ENCODE measurements at regions of chr10 and their contacts with region 1.

Region 1: GRCh38 chr10:72061491-72061890 is 26.9 kb downstream of the SPOCK2 start:
- DNase-seq: no peak
- H3K4me3 ChIP-seq: no peak overlapping the region
- H3K4me3 Mint-ChIP-seq: peak overlapping the region in 3 of 8 donors; percentile 34 to 71 (median 36)
- H3K27ac ChIP-seq: no peak overlapping the region
- H3K27ac Mint-ChIP-seq: peak overlapping the region in 6 of 7 donors; percentile 68 to 92 (median 83)
- H3K4me1 ChIP-seq: peaks cover 5% of the 10 kb centered on the region
- H3K4me1 Mint-ChIP-seq: peaks cover 17 to 49% (median 23%) of the 10 kb centered on the region in 4 donors
- H3K27me3 ChIP-seq: no peaks in the 10 kb centered on the region
- H3K27me3 Mint-ChIP-seq: no peaks in the 10 kb centered on the region

Region 2: GRCh38 chr10:71999360-72000072 is 62.0 kb before region 1 on chr10:
- CTCF ChIA-PET with region 1: no interaction called
- POLR2A ChIA-PET with region 1: no interaction called
- intact Hi-C with region 1: no loop called
- DNase-seq: no peak
- H3K4me3 ChIP-seq: no peak overlapping the region
- H3K4me3 Mint-ChIP-seq: no peak overlapping the region
- H3K27ac ChIP-seq: no peak overlapping the region
- H3K27ac Mint-ChIP-seq: no peak overlapping the region
- H3K4me1 ChIP-seq: no peaks in the 10 kb centered on the region
- H3K4me1 Mint-ChIP-seq: peaks cover 0 to 2% (median 0%) of the 10 kb centered on the region in 4 donors
- H3K27me3 ChIP-seq: no peaks in the 10 kb centered on the region
- H3K27me3 Mint-ChIP-seq: peaks cover 0 to 2% of the 10 kb centered on the region in 2 donors

Region 3: DNA sequence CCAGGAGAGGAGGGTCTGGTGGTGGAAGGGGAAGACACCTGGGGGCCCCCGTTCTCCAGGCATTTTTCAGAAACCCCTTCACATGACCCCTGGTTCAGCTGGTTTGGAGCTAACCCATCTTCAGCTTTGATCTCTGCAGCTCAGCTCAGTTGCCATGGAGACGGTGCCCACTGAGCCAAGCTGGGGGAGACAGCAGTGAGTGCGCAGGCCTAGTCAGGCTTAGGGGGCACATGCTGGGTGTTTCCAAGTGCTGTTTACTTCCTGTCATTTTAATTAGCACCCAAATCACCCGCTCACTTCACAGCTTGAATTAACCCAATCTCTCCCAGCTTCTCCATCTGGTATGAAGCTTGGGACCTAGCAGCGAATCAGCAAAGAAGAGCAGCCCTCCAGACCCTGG is 17.9 kb after region 1 on chr10:
- CTCF ChIA-PET with region 1: interaction called, 4 read pairs
- POLR2A ChIA-PET with region 1: interaction called, 329 read pairs
- intact Hi-C with region 1: no loop called
- DNase-seq: peak; percentile 55 to 85 (median 71)
- H3K4me3 ChIP-seq: peak overlapping the region in 1 of 2 donors; percentile 25
- H3K4me3 Mint-ChIP-seq: peak overlapping the region; percentile 47 to 96 (median 81)
- H3K27ac ChIP-seq: peak overlapping the region; percentile 94
- H3K27ac Mint-ChIP-seq: peak overlapping the region; percentile 86 to 97 (median 93)
- H3K4me1 ChIP-seq: peaks cover 97% of the 10 kb centered on the region
- H3K4me1 Mint-ChIP-seq: peaks cover 59 to 99% (median 87%) of the 10 kb centered on the region in 4 donors
- H3K27me3 ChIP-seq: no peaks in the 10 kb centered on the region
- H3K27me3 Mint-ChIP-seq: no peaks in the 10 kb centered on the region

Region 4: GRCh38 chr10:72107325-72108003 is 46.0 kb after region 1 on chr10:
- CTCF ChIA-PET with region 1: interaction called, 3 read pairs
- POLR2A ChIA-PET with region 1: interaction called, 13 read pairs
- intact Hi-C with region 1: no loop called
- DNase-seq: peak; percentile 62 to 72 (median 71)
- H3K4me3 ChIP-seq: peak overlapping the region in 1 of 2 donors; percentile 16
- H3K4me3 Mint-ChIP-seq: peak overlapping the region; percentile 61 to 87 (median 81)
- H3K27ac ChIP-seq: peak overlapping the region; percentile 53
- H3K27ac Mint-ChIP-seq: peak overlapping the region; percentile 81 to 97 (median 90)
- H3K4me1 ChIP-seq: peaks cover 78% of the 10 kb centered on the region
- H3K4me1 Mint-ChIP-seq: peaks cover 61 to 91% (median 80%) of the 10 kb centered on the region in 4 donors
- H3K27me3 ChIP-seq: no peaks in the 10 kb centered on the region
- H3K27me3 Mint-ChIP-seq: no peaks in the 10 kb centered on the region